ENCODE measurements at regions of chr7 and their contacts with region 1.

Region 1: DNA sequence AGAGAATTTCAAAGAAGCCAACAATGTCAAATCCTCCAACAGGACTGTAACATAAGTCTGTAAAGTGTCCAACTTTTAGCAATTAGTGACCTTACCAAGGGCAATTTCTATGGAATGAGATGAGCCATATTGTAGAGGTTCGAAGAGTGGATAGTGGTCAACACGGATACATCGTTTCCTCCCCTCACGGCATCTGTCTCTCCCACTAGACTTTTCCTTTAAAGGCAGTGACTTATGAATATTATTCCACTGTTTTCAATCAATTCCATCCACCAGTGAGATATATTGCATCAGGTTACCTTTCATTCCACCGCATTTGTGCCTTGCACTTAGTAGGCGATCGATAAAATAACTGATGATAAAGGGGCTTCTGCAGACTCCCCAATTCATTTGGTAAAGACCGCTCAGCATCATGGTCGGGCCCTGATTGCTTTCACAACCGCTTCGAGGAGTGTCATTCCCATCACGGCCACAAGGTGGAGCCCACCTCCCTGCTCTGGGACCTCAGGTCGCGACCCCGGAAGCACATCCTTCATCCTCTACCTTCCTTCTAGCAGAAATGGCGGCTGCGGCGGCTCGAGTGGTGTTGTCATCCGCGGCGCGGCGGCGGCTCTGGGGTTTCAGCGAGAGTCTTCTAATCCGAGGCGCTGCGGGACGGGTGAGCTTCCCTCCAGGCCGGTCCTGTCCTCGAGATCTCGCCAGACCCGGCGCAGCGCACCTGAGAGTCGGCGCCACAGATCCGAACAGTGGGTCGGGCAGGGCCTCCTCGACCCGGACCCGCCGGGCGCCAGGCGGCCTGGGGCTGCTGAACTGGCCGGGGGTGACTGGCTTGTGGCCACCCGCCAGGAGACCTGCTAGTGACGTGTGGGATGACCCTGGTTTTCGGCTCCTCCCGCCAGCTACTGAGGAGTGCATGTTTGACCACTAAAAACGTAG is at the start of gene PMPCB:
- DNase-seq: peak; percentile 77
- H3K4me3 ChIP-seq: peak within 1 kb of the TSS; percentile 76
- H3K27ac ChIP-seq: peak within 1 kb of the TSS; percentile 86
- H3K27me3 ChIP-seq: no peaks in the 10 kb centered on the region
- CTCF ChIP-seq: peak; percentile 94
- polyA plus RNA-seq, gene PMPCB: 77.6 and 91.9 TPM in 2 replicates

Region 2: DNA sequence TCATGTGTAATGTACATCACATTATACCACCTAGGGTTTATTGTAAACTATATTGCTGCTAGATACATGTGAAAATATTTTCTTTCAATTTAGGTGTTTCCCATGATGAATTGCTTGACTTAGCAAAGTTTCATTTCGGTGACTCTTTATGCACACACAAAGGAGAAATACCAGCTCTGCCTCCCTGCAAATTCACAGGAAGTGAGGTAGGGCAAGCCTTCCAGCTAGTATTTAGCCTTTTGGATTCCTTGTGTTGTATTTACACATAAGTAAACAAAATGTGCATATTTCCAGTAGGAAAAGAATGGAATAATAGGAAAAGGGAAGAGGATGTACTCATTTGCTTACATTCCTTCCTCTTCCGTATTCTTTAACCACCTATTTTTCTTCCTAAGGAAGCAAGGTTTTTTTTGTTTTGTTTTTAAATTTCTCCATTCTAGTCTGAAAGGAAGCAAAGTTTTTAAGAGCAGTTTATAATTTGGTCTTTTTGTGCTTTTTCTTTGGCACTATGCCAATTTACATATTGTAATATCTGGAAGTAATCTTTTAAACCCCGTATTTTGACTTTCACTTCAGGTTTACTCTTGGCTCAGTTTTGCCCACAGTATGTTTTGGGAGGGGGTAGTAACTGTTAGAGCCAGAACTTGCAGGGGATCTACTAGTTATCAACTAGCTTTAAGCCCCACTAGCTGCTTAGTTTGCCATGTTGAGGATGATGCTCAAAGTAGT is 10.5 kb after region 1 on chr7:
- CTCF ChIA-PET with region 1: interaction called, 21 read pairs
- POLR2A ChIA-PET with region 1: no interaction called
- DNase-seq: no peak
- H3K4me3 ChIP-seq: no peak overlapping the region
- H3K27ac ChIP-seq: no peak overlapping the region
- H3K27me3 ChIP-seq: no peaks in the 10 kb centered on the region
- CTCF ChIP-seq: no peak

Region 3: GRCh38 chr7:103541026-103541425 is 243.9 kb after region 1 on chr7:
- CTCF ChIA-PET with region 1: no interaction called
- POLR2A ChIA-PET with region 1: no interaction called
- DNase-seq: no peak
- H3K4me3 ChIP-seq: no peak overlapping the region
- H3K27ac ChIP-seq: no peak overlapping the region
- H3K27me3 ChIP-seq: no peaks in the 10 kb centered on the region
- CTCF ChIP-seq: no peak